ENCODE measurements at regions of chr5 and their contacts with region 1.

Region 1: DNA sequence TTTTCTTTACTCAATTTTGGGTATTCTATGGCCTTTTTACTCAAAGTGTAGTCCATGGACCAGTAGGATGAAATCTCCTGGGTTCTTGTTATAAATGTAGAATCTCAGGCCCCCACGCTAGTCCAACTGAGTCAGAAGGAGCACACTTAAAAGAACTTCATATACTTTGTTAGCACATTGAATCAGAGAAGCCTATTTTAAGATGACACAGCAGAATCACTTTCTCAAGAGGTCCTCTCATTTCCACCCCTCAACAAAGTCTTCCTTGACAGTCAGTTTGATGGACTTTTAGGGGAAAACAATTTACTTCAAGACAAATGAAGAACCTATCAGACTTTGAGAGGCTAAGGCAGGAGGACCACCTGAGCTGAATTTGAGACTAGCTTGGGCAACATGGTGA is 37.7 kb upstream of the FGF10 start:
- DNase-seq: no peak
- ATAC-seq: no peak
- H3K4me3 ChIP-seq: no peak overlapping the region
- H3K27ac ChIP-seq: no peak overlapping the region
- H3K4me1 ChIP-seq: no peaks in the 10 kb centered on the region
- H3K27me3 ChIP-seq: no peaks in the 10 kb centered on the region
- CTCF ChIP-seq: no peak

Region 2: GRCh38 chr5:43592363-43592762 is 834.6 kb before region 1 on chr5:
- CTCF ChIA-PET with region 1: no interaction called
- POLR2A ChIA-PET with region 1: interaction called, 18 read pairs
- in situ Hi-C with region 1: no loop called
- intact Hi-C with region 1: no loop called
- DNase-seq: no peak
- ATAC-seq: no peak
- H3K4me3 ChIP-seq: no peak overlapping the region
- H3K27ac ChIP-seq: no peak overlapping the region
- H3K4me1 ChIP-seq: no peaks in the 10 kb centered on the region
- H3K27me3 ChIP-seq: no peaks in the 10 kb centered on the region
- CTCF ChIP-seq: no peak

Region 3: DNA sequence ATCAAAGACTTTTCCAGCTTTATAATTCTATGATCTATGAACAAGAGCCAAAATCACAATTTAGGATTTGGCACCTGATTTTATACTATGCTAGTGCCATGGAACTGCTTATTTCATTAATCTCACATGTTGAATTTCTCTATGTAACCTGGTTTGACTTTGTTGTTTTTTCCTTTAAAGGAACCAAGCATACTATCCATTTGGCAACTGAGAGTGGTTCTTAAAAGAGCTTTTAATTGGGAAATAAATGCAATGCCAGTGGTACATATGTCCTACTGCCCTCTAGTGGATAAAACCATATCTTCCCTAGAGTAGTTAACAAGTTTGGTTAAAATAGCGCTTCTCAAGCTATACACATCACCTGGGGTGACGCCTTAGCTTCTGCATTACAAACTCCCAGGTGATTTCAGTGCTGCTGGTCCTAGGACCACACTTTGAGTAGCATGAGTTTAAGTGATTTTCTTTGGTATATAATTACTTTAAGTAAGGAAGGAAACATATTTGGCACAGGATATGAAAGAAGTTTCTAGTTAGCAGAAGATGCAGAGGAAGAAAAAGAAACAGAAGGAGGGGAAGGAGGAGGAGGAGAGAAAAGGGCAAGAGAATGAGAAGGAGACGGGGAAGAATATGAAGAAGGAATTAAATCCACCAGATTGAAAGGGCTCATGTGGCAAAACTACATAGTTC is 94.5 kb before region 1 on chr5:
- CTCF ChIA-PET with region 1: no interaction called
- POLR2A ChIA-PET with region 1: no interaction called
- in situ Hi-C with region 1: no loop called
- intact Hi-C with region 1: no loop called
- DNase-seq: peak; percentile 25
- ATAC-seq: no peak
- H3K4me3 ChIP-seq: no peak overlapping the region
- H3K27ac ChIP-seq: no peak overlapping the region
- H3K4me1 ChIP-seq: no peaks in the 10 kb centered on the region
- H3K27me3 ChIP-seq: no peaks in the 10 kb centered on the region
- CTCF ChIP-seq: peak; percentile 53; the same call in 1 of the 2 replicates

Measured in Panc1 (cell line).